ENCODE measurements at regions of chr12 and their contacts with region 1.

Region 1: GRCh38 chr12:124940549-124941527 is 26.4 kb upstream of the UBC start:
- H3K4me3 ChIP-seq: peak overlapping the region; percentile 34
- H3K27ac ChIP-seq: peak overlapping the region; percentile 72
- H3K4me1 ChIP-seq: peaks cover 4% of the 10 kb centered on the region
- CTCF ChIP-seq: peak; percentile 99

Region 2: GRCh38 chr12:124754949-124755800 is 185.7 kb before region 1 on chr12:
- CTCF ChIA-PET with region 1: no interaction called
- POLR2A ChIA-PET with region 1: no interaction called
- H3K4me3 ChIP-seq: no peak overlapping the region
- H3K27ac ChIP-seq: no peak overlapping the region
- H3K4me1 ChIP-seq: no peaks in the 10 kb centered on the region
- CTCF ChIP-seq: no peak

Region 3: DNA sequence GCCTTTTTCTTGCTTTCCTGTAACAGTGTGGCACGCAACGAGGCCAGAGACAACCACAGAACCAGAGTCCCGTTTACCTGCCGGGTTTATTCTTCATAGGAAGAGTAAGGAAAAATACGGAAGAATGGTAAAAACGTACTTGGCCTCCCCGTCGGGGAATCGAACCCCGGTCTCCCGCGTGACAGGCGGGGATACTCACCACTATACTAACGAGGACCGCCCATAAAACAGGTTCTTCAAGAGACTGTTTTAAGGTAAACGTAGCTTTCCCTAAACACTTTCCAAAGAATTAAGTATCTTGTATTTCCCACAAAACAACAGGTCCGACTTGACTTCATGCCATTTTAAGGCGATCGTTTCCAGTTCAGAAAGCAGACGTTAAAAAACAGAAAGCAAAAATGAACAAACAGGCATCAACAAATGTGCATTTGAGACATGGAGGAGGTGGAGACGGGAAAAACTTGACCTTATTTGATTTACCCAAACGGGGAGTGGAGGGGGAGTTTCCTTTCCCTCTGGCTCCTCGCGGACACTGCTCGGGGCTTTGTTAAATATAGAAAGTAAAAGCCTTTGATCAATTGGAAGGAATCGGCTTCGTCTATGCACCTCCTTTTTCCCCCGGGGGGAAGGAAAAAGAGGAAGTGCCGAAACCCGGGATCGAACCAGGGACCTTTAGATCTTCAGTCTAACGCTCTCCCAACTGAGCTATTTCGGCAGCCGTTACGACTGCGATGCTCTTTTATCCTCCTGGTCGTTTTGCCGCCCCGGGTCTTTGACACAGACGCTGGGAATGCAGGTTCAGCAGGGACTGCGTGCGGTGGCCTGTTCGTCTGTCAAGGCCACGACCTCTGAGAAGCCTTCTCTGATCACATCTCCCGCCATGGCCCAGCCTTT is 13.4 kb before region 1 on chr12:
- CTCF ChIA-PET with region 1: interaction called, 19 read pairs
- POLR2A ChIA-PET with region 1: interaction called, 26 read pairs
- H3K4me3 ChIP-seq: peak overlapping the region; percentile 71
- H3K27ac ChIP-seq: peak overlapping the region; percentile 72
- H3K4me1 ChIP-seq: no peaks in the 10 kb centered on the region
- CTCF ChIP-seq: no peak

Region 4: GRCh38 chr12:124952801-124953200 is 12.0 kb after region 1 on chr12:
- CTCF ChIA-PET with region 1: interaction called, 12 read pairs
- POLR2A ChIA-PET with region 1: interaction called, 9 read pairs
- H3K4me3 ChIP-seq: no peak overlapping the region
- H3K27ac ChIP-seq: no peak overlapping the region
- H3K4me1 ChIP-seq: no peaks in the 10 kb centered on the region
- CTCF ChIP-seq: no peak

Region 5: GRCh38 chr12:124992874-124993625 is 52.2 kb after region 1 on chr12:
- CTCF ChIA-PET with region 1: interaction called, 11 read pairs
- POLR2A ChIA-PET with region 1: interaction called, 3 read pairs
- H3K4me3 ChIP-seq: peak overlapping the region; percentile 67
- H3K27ac ChIP-seq: peak overlapping the region; percentile 80; the same call in 1 of the 2 replicates
- H3K4me1 ChIP-seq: no peaks in the 10 kb centered on the region
- CTCF ChIP-seq: peak; percentile 64